PC-3 (cell line): ENCODE measurements at regions of chr2 and their contacts with region 1.

Region 1: GRCh38 chr2:196884368-196884767 is 42.1 kb downstream of the PGAP1 start:
- DNase-seq: no peak
- ATAC-seq: no peak
- H3K4me3 ChIP-seq: no peak overlapping the region
- H3K27ac ChIP-seq: no peak overlapping the region
- H3K4me1 ChIP-seq: no peaks in the 10 kb centered on the region
- H3K27me3 ChIP-seq: no peaks in the 10 kb centered on the region
- CTCF ChIP-seq: no peak

Region 2: DNA sequence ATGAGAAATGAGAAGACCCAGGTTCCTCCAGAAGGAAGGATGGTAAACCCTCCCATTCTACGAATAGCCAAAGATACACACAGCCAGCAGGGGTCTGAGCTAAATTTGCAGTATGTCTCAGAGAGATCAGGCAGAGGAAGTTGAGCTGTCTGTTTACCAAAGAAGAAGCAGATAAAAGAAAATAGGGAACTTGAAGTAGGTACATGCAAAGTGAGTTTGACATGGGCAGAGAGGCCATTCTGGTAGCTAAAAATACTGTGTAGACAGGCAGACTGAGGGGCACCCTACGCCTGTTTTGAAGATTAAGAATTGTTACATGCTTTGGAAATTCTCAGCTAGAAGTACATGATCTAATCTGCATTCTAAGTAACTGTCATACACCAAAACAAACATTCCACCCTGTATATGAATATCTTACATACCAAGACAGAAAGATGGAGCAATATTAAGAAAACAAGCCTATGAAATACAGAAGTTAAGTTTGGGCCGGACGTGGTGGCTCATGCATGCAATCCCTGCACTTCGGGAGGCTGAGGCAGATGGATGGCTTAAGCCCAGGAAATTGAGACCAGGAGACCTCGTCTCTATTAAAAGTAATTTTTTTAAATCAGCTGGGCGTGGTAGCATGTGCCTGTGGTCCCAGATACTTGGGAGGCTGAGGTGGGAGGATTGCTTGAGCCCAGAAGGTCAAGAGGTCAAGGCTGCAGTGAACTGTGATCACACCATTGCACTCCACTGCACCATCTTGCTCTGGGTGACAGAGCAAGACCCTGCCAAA is 268.3 kb after region 1 on chr2:
- CTCF ChIA-PET with region 1: interaction called, 12 read pairs
- POLR2A ChIA-PET with region 1: no interaction called
- intact Hi-C with region 1: no loop called
- DNase-seq: peak; percentile 13
- ATAC-seq: peak; percentile 72
- H3K4me3 ChIP-seq: no peak overlapping the region
- H3K27ac ChIP-seq: no peak overlapping the region
- H3K4me1 ChIP-seq: peaks cover 9% of the 10 kb centered on the region
- H3K27me3 ChIP-seq: no peaks in the 10 kb centered on the region
- CTCF ChIP-seq: no peak